Left colon (tissue), 2 donors: ENCODE measurements at regions of chr7 and their contacts with region 1.

Region 1: GRCh38 chr7:44921607-44922359 is 36.5 kb upstream of the PURB start:
- DNase-seq: peak; percentile 80 to 97
- ATAC-seq: peak; percentile 94

Region 2: GRCh38 chr7:44858161-44858560 is 63.6 kb before region 1 on chr7:
- intact Hi-C with region 1: loop called in 1 of 2 experiments (anchors 5 kb)
- DNase-seq: no peak
- ATAC-seq: no peak

Region 3: GRCh38 chr7:45057871-45058270 is 136.1 kb after region 1 on chr7:
- intact Hi-C with region 1: no loop called
- DNase-seq: no peak
- ATAC-seq: no peak